Activated CD4-positive, alpha-beta T cell treated with anti-CD3 and anti-CD28 coated beads for 36 hours (primary cell): ENCODE measurements at regions of chr13 and their contacts with region 1.

Region 1: DNA sequence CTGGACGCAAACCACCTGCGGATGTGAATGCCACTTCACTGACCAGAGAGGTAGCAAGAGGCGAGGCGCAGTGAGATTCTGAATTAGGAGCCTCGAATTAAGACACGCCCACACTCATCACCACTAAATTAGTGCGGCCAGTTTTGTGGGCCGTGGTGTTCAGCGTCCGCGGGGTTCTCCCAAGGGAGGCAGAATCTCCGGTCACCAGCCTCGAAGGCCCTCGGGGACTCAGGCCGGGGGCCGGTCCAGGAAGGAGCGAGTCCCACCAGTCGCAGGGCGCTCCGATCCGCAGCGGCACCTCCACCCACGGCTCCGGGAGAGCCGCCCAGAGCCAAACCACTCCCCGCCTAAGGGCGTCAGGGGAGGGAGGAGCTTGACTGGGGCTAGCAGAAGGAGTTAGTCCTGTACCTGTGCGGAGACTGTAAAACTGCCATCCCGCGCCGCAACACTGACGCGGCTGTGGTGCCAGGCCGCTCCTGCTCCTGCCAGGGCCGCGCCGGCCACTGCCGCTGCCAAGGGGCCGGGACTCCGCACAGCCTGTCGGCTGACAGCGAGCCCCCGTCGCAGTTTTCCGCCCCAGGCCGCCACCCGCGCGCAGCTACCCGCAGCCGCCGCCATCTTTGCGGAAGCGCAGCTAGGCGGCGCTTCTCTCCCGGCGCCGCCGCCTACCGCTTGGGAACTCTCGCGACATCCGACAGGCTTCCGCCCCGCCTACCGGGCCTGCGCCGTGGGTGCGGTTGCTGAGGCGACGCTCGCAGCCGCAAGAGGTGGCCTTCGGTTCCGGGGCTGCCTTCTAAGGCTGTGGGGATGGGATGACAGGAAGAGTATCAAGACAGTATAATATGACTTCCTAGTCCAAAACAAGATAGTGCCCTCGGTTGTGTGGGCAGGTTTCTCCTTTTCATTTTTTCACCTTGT is at the start of gene MICU2:
- DNase-seq: peak; percentile 97
- ATAC-seq: peak; percentile 96
- H3K4me3 Mint-ChIP-seq: peak within 1 kb of the TSS; percentile 85
- H3K27ac Mint-ChIP-seq: peak within 1 kb of the TSS; percentile 94
- H3K4me1 Mint-ChIP-seq: peaks cover 35% of the 10 kb centered on the region
- H3K27me3 Mint-ChIP-seq: peaks cover 1% of the 10 kb centered on the region
- total RNA-seq, gene MICU2: 28.4 to 28.7 TPM

Region 2: DNA sequence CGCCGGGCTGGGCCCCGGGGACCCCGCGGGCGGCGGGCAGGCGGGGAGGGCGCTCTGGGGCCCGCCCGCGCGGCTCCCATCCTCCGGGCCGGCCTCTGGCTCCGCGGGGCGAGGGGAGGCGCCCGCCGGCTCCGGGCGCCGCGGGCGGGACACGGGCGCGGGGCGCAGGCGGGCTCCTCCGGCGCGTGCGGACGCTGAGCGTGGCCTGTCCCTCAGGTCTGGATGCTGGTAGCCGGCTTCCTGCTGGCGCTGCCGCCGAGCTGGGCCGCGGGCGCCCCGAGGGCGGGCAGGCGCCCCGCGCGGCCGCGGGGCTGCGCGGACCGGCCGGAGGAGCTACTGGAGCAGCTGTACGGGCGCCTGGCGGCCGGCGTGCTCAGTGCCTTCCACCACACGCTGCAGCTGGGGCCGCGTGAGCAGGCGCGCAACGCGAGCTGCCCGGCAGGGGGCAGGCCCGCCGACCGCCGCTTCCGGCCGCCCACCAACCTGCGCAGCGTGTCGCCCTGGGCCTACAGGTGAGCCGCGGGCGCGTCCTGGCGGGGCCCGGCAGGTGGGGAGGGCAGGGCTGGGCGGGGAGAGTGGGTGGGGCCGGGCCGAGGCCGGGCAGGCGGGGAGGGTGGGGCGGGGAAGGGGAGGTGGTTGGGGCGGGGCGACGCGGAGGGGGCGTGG is 899.9 kb before region 1 on chr13:
- CTCF ChIA-PET with region 1: no interaction called
- POLR2A ChIA-PET with region 1: no interaction called
- intact Hi-C with region 1: loop called in 1 of 2 experiments (anchors 2 kb)
- DNase-seq: peak; percentile 87
- ATAC-seq: peak; percentile 89
- H3K4me3 Mint-ChIP-seq: peak overlapping the region; percentile 58
- H3K27ac Mint-ChIP-seq: no peak overlapping the region
- H3K4me1 Mint-ChIP-seq: peaks cover 13% of the 10 kb centered on the region
- H3K27me3 Mint-ChIP-seq: peaks cover 21% of the 10 kb centered on the region

Region 3: DNA sequence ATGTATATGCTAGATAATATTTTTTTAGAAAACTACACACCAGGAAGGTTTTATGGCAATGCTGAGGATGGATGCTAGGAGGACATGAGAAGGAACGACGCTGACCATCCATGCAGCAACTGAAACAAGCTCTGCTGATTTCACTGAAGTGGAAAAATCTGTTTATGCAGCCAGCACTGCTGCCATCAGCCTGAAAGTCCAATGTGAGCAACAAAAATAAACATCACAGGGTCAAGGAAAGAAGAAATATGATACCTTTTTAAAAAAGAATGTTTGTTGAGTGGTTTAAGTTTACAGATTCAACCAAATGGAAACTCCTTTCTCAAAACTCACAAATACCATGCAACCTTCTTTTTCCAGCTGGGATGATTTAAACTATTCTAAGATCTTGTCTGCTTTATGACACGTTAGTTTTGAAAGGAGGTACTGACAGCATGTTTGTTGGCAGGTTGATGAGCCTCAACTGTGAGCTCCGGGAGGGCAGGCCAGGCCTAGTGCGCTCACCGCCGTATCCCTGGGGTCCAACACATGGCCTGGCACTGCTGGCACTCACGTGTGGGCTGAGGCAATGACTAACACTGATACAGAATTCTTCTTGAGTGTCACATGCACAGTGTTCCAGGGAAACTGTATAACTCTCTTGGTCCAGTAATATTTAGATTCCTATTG is 589.2 kb before region 1 on chr13:
- CTCF ChIA-PET with region 1: no interaction called
- POLR2A ChIA-PET with region 1: no interaction called
- intact Hi-C with region 1: loop called in 1 of 2 experiments (anchors 5 kb)
- DNase-seq: no peak
- ATAC-seq: no peak
- H3K4me3 Mint-ChIP-seq: no peak overlapping the region
- H3K27ac Mint-ChIP-seq: no peak overlapping the region
- H3K4me1 Mint-ChIP-seq: peaks cover 28% of the 10 kb centered on the region
- H3K27me3 Mint-ChIP-seq: no peaks in the 10 kb centered on the region

Region 4: DNA sequence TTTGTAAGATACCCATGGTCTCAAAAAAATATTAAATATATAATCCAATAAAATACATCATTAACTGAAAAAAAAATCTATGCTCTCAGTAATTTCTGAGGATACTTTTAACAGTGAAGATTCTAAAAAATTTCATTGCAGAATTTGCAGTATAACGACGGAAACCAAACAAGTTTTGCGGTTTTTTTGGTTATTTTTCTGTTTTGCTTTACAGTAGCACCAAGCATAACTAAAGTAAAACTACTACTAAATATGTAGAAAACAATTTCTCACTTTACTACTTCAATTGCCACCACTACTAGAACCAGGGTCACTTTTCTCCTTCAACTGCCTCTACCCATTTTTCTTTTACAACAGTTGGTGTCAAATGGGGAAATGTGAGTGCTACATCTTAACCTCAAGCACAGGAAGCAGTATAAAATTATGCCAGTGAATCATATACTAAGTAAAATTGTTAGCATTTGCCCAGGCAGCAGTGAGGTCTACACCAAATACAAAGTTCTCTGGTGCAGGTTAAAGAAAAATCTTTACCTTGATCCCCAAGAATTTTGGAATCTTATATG is 24.0 kb before region 1 on chr13:
- CTCF ChIA-PET with region 1: interaction called, 6 read pairs
- POLR2A ChIA-PET with region 1: interaction called, 4 read pairs
- intact Hi-C with region 1: loop called in 1 of 2 experiments (anchors 1 kb)
- DNase-seq: no peak
- ATAC-seq: peak; percentile 90
- H3K4me3 Mint-ChIP-seq: no peak overlapping the region
- H3K27ac Mint-ChIP-seq: peak overlapping the region; percentile 11
- H3K4me1 Mint-ChIP-seq: peaks cover 38% of the 10 kb centered on the region
- H3K27me3 Mint-ChIP-seq: no peaks in the 10 kb centered on the region